ENCODE measurements at regions of chr4 and their contacts with region 1.

Region 1: GRCh38 chr4:109559983-109560686 is at the start of gene MCUB:
- DNase-seq: peak; percentile 85
- H3K4me3 ChIP-seq: peak within 1 kb of the TSS; percentile 73 to 93 (median 90)
- H3K27ac ChIP-seq: peak within 1 kb of the TSS; percentile 94
- H3K4me1 ChIP-seq: peaks cover 16% of the 10 kb centered on the region
- H3K27me3 ChIP-seq: no peaks in the 10 kb centered on the region
- CTCF ChIP-seq: no peak
- POLR2A ChIP-seq: no peak
- total RNA-seq, gene MCUB: 32.5 and 35.2 TPM in 2 replicates

Region 2: DNA sequence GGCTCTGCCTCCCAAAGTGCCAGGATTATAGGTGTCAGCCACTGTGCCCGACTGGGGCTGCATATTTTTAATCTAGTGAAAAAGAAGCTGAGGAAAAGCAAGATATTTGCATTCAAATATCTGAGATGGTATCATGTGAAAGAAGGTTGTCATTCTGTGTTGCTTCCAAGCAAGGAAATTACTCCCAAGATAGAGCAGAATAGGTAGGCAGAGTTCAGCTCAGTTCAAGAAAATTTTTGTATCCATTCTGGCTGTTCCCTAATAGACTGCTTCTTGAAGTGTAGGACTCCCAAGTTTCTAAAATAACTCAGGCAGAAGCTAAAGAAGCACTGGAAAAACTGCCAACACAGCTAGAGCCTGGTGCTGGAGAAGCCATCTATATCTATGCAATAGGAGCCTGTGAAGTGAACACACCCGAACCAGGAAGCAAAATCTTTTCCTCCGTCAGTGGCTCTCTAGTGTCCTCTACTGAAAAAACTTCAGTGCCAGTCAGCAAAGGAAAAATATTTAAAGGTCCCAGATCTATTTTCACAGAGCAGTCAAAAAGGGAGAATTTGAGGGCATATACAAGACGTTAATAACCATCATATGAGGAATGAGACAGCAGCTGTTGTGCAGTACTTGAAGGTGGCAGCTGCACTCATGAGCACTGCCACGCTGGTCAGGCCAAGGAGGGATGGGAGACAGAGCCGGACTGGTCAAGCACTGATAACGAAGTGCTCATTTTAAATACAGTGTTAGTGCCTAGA is 14.1 kb after region 1 on chr4:
- CTCF ChIA-PET with region 1: interaction called, 28 read pairs
- POLR2A ChIA-PET with region 1: no interaction called
- dilution Hi-C with region 1: no loop called
- intact Hi-C with region 1: loop called (anchors 1 kb)
- DNase-seq: peak; percentile 40
- H3K4me3 ChIP-seq: no peak overlapping the region
- H3K27ac ChIP-seq: no peak overlapping the region
- H3K4me1 ChIP-seq: peaks cover 19% of the 10 kb centered on the region
- H3K27me3 ChIP-seq: no peaks in the 10 kb centered on the region
- CTCF ChIP-seq: peak in 1 of 2 donors; percentile 2
- POLR2A ChIP-seq: no peak

Region 3: DNA sequence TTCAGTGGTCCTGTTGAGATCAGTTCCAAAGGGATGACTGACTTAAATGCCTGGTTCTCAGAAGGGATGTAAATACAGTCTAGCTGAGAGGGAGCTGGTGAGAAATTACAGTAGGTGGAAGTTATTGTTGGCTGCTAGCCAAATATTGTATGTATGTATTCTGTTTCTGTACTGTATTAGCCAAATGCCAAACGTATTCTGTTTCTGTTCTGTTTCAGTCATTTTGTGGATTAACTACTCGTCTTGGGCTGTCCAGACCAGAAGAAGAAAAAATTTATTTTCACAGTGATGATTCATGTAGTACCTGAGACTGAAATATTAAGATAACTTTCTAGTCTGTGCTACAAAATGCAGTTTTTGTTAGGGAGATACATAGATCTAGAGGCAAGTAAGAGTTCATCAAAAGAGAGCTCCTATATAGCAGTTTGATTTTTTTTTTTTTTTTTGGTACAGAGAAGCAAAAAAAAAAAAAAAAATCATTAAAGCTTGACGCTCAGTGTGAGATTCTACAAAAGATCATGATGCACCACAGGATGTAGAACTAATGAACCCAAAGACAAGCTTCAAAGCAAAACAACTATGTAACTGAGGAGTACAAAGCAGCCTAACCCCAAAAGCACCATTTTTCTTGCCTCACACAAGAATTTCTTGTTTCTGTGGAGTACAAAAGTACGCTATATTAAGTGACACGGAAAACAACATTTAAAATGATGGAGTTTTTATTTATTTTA is 88.3 kb after region 1 on chr4:
- CTCF ChIA-PET with region 1: interaction called, 6 read pairs
- POLR2A ChIA-PET with region 1: no interaction called
- dilution Hi-C with region 1: no loop called
- intact Hi-C with region 1: loop called (anchors 1 kb)
- DNase-seq: peak; percentile 93
- H3K4me3 ChIP-seq: peak overlapping the region in 1 of 3 experiments; percentile 38
- H3K27ac ChIP-seq: peak overlapping the region; percentile 14
- H3K4me1 ChIP-seq: peaks cover 11% of the 10 kb centered on the region
- H3K27me3 ChIP-seq: no peaks in the 10 kb centered on the region
- CTCF ChIP-seq: no peak
- POLR2A ChIP-seq: no peak

Region 4: DNA sequence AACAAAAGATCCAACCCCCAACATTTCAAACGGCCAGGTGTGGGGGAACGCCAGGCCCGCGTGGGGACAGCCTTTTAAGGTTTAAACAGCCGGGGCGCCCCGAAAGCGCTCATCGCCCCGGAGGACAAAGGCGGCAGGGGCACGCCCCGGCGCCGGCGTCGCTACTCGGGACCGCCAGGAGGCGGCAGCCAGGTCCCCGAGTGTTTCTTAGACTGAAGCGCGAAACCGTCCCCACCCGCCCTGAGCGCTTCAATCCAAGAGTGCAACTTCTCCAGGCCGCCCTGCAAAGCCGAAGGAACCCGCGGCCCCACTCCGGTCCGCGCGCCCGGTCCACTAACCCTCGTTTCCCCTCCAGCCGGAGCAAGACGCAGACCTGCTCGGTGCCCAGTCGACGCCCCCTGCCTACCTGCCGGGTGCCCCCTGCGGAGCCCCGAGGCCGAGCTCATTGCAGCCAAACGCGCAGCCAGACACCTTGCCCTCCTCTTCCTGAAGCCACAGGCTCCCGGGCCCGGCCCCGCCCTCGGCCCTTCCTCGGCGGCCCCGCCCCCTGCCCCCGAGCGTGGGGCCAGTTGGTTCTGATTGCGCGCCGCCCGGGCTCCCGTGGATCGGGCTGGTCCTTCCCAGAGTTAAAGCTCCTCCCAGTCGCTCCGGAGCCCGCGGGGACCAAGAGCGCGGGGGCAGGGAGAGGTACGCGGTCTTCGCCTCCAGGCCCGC is 143.0 kb after region 1 on chr4 and contains the start of gene CASP6:
- CTCF ChIA-PET with region 1: no interaction called
- POLR2A ChIA-PET with region 1: no interaction called
- dilution Hi-C with region 1: no loop called
- intact Hi-C with region 1: loop called (anchors 2 kb)
- DNase-seq: peak; percentile 80
- H3K4me3 ChIP-seq: peak within 1 kb of the TSS; percentile 81 to 93 (median 83)
- H3K27ac ChIP-seq: peak within 1 kb of the TSS; percentile 72
- H3K4me1 ChIP-seq: peaks cover 14% of the 10 kb centered on the region
- H3K27me3 ChIP-seq: no peaks in the 10 kb centered on the region
- CTCF ChIP-seq: peak; percentile 69 to 81
- POLR2A ChIP-seq: peak; percentile 67
- total RNA-seq, gene CASP6: 35.4 and 37.0 TPM in 2 replicates

Region 5: DNA sequence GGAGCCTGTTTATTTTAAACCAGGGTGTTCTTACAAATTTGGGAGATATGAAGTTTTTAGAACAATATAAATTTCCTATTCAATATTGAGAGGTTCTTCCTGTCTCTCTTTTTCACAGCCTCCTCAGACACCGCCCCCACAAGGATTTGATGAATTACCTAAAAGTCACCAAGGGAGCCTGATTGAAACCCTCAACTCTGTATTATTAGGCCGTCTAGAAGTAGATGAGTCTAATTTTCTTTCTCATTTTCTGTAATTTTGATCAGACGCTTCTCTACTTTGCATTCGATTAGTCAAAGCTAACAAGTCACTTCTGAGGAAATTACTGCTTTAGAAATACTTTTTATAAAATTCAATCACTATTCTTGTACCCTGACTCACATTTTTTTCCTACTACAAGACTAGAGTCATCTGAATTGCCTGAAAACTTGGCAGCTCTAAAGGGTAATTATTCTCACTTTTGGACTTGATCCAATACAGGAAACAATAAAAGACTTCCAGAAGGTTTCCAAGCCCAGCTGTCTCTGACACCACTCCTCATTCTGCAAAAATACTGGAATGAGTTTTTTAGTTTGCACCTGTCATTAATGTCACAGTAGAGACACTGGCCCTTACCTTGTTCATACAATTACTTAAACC is 527.1 kb after region 1 on chr4:
- CTCF ChIA-PET with region 1: no interaction called
- POLR2A ChIA-PET with region 1: no interaction called
- dilution Hi-C with region 1: no loop called
- intact Hi-C with region 1: loop called (anchors 10 kb)
- DNase-seq: peak; percentile 91
- H3K4me3 ChIP-seq: no peak overlapping the region
- H3K27ac ChIP-seq: no peak overlapping the region
- H3K4me1 ChIP-seq: peaks cover 35% of the 10 kb centered on the region
- H3K27me3 ChIP-seq: no peaks in the 10 kb centered on the region
- CTCF ChIP-seq: no peak
- POLR2A ChIP-seq: no peak

Measured in endothelial cell of umbilical vein (primary cell).